ENCODE measurements at regions of chr6 and their contacts with region 1.

Region 1: GRCh38 chr6:152552616-152553209 is 84.4 kb downstream of the SYNE1 start:
- DNase-seq: peak; percentile 53
- ATAC-seq: peak; percentile 87
- H3K4me3 ChIP-seq: no peak overlapping the region
- H3K27ac ChIP-seq: no peak overlapping the region
- H3K4me1 ChIP-seq: no peaks in the 10 kb centered on the region
- H3K27me3 ChIP-seq: no peaks in the 10 kb centered on the region
- CTCF ChIP-seq: peak; percentile 87

Region 2: GRCh38 chr6:152290693-152291092 is 262.0 kb before region 1 on chr6:
- CTCF ChIA-PET with region 1: no interaction called
- POLR2A ChIA-PET with region 1: no interaction called
- in situ Hi-C with region 1: no loop called
- intact Hi-C with region 1: no loop called
- DNase-seq: no peak
- ATAC-seq: no peak
- H3K4me3 ChIP-seq: no peak overlapping the region
- H3K27ac ChIP-seq: no peak overlapping the region
- H3K4me1 ChIP-seq: no peaks in the 10 kb centered on the region
- H3K27me3 ChIP-seq: no peaks in the 10 kb centered on the region
- CTCF ChIP-seq: no peak

Region 3: DNA sequence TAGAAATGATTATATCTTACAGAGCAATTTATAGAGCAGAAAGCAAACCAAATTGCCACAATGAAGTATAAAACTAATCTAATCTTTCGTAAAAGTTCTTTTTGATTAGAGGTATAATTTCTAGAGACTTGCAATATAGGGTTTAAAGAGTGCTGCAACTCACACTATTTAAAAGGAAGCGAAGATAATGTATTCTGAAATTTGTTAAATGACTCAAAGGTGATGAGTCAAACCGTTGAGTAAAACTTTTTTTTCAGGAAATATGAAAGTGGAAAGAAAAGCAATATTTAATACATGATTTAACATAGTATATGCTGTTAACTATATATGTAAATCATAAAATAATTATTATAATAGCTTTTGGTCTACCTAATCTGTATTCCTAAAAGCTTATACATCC is 49.2 kb before region 1 on chr6:
- CTCF ChIA-PET with region 1: no interaction called
- POLR2A ChIA-PET with region 1: no interaction called
- in situ Hi-C with region 1: no loop called
- intact Hi-C with region 1: no loop called
- DNase-seq: no peak
- ATAC-seq: no peak
- H3K4me3 ChIP-seq: no peak overlapping the region
- H3K27ac ChIP-seq: no peak overlapping the region
- H3K4me1 ChIP-seq: no peaks in the 10 kb centered on the region
- H3K27me3 ChIP-seq: no peaks in the 10 kb centered on the region
- CTCF ChIP-seq: no peak

Region 4: DNA sequence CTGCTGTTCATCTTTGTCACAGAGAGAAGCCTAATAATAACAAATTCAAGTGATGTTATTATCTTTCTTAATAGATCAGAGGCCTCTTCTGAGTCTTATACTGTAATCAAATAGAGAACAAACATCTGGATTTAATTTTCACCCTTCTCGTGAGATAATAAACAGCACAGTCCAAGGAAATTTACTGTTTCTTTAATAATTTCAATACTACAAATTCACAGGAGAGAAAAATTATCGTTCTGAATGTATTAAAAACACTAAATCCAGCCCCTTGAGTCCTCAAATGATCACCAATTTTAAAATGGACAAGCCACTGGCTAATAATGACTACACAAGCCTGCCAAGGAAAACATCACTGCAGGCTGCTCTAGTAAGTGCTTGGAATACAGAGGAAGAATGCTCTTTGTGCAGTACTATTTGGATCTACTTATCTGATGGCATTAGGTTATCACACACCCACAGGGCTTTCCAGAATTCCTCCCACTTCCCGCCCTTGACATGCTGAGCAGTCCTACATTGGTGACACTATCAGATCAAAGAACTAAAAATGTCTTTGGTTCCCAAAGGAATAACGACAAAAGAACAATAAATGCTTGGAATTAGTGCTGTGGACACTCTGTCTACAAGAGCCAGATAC is 46.3 kb after region 1 on chr6:
- CTCF ChIA-PET with region 1: no interaction called
- POLR2A ChIA-PET with region 1: no interaction called
- in situ Hi-C with region 1: no loop called
- intact Hi-C with region 1: no loop called
- DNase-seq: no peak
- ATAC-seq: no peak
- H3K4me3 ChIP-seq: no peak overlapping the region
- H3K27ac ChIP-seq: no peak overlapping the region
- H3K4me1 ChIP-seq: no peaks in the 10 kb centered on the region
- H3K27me3 ChIP-seq: no peaks in the 10 kb centered on the region
- CTCF ChIP-seq: no peak

Region 5: GRCh38 chr6:152642989-152643388 is 90.3 kb after region 1 on chr6:
- CTCF ChIA-PET with region 1: no interaction called
- POLR2A ChIA-PET with region 1: no interaction called
- in situ Hi-C with region 1: no loop called
- intact Hi-C with region 1: loop called (anchors 2 kb)
- DNase-seq: peak; percentile 12
- ATAC-seq: peak; percentile 89
- H3K4me3 ChIP-seq: no peak overlapping the region
- H3K27ac ChIP-seq: no peak overlapping the region
- H3K4me1 ChIP-seq: no peaks in the 10 kb centered on the region
- H3K27me3 ChIP-seq: peaks cover 2% of the 10 kb centered on the region; the same call in 1 of the 2 replicates
- CTCF ChIP-seq: peak; percentile 72

Region 6: GRCh38 chr6:152669895-152670294 is 117.2 kb after region 1 on chr6:
- CTCF ChIA-PET with region 1: interaction called, 5 read pairs
- POLR2A ChIA-PET with region 1: no interaction called
- in situ Hi-C with region 1: no loop called
- intact Hi-C with region 1: loop called (anchors 2 kb)
- DNase-seq: no peak
- ATAC-seq: peak; percentile 72; the same call in 1 of the 2 replicates
- H3K4me3 ChIP-seq: no peak overlapping the region
- H3K27ac ChIP-seq: no peak overlapping the region
- H3K4me1 ChIP-seq: no peaks in the 10 kb centered on the region
- H3K27me3 ChIP-seq: no peaks in the 10 kb centered on the region
- CTCF ChIP-seq: peak; percentile 41; the same call in 1 of the 2 replicates

Region 7: GRCh38 chr6:152783217-152783878 is 230.6 kb after region 1 on chr6:
- CTCF ChIA-PET with region 1: no interaction called
- POLR2A ChIA-PET with region 1: no interaction called
- in situ Hi-C with region 1: no loop called
- intact Hi-C with region 1: no loop called
- DNase-seq: no peak
- ATAC-seq: no peak
- H3K4me3 ChIP-seq: no peak overlapping the region
- H3K27ac ChIP-seq: no peak overlapping the region
- H3K4me1 ChIP-seq: no peaks in the 10 kb centered on the region
- H3K27me3 ChIP-seq: no peaks in the 10 kb centered on the region
- CTCF ChIP-seq: no peak

Region 8: DNA sequence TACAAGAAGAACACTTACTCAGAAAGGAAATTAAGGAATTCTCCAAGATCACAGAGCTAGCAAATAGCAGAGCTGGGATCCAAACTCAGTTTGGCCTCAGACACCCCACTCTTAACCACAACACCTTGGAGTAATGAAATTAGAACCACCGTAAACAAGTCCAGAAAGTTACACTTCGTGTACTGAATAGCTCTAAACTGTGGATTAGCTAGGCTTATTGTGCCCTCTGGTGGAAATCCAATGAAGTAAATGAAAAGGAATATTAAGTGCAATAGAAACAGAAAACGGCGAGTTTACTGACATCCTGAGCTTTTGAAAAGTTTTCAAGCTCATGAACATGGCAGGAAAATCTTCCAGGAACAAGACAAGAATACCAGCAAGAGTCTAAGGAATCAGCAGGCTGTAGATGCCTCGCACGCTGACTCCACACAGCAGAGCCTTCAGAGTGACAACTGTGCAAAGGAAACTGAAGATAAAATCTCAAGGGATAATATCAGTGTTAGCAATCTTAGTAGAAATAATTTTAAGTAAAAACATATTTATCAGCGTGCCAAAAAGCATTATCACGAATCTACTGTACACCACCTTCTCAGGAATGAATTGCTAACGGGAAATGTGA is 395.5 kb after region 1 on chr6:
- CTCF ChIA-PET with region 1: no interaction called
- POLR2A ChIA-PET with region 1: no interaction called
- in situ Hi-C with region 1: no loop called
- intact Hi-C with region 1: loop called (anchors 2 kb)
- DNase-seq: peak; percentile 20
- ATAC-seq: peak; percentile 92
- H3K4me3 ChIP-seq: peak overlapping the region in 1 of 2 experiments; percentile 29; a peak in 1 of 4 replicates
- H3K27ac ChIP-seq: no peak overlapping the region
- H3K4me1 ChIP-seq: peaks cover 4% of the 10 kb centered on the region; the same call in 1 of the 2 replicates
- H3K27me3 ChIP-seq: 0 out of 2 replicates have a peak, but pooled peaks cover 4% of the 10 kb centered on the region
- CTCF ChIP-seq: peak; percentile 78

Measured in Panc1 (cell line).